ENCODE measurements at regions of chr7 and their contacts with region 1.

Region 1: DNA sequence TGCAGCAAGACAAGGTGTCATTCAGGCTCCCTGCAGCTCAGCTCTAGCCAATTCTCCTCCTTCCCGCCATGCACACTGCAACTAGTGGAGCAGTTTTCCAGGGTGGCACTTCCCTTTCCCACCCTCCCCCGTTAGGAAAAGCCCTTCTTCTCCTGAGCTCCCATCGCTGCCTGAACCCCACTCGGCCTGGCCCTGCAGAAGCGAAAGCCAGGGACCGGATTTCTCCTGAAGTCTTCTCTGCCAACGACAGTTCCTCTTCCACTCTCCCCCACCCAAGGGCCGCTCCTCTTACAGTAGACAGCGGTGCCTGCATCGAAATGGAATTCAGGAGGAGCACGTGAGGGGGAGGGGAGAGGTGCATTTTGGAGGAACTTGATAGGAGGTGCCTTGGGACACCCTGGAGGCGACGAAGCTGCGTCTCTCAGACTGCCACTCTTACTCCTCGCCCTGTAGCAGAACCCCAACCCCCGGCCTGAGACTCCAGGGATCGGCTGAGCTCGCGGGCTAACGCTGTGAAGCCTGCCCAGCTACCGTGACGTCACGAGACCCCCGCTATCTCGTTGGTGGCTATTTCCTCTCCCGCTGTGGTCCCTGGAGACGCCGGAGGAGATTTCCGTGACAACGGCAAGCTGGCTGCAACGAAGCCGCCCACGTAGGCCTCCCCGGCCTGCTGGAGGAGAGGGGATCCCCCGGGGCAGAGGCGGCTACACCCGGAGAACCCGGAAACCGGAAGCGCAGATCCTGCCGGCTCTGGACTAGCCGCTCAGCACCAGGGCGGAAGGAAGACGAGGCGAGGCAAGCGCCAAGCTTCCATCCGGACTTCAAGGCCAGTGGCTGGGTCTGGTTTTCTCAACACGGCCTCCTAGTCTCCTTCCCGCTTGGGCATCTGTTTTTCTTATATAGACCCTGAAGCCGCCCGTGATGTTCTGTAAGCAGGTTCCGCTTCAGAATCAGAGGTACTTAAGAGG is 109.7 kb downstream of the RALA start:
- DNase-seq: peak; percentile 84 to 98 (median 95)
- ATAC-seq: peak; percentile 92
- H3K4me3 ChIP-seq: peak overlapping the region; percentile 79 to 85
- H3K4me3 Mint-ChIP-seq: peak overlapping the region; percentile 91
- H3K27ac ChIP-seq: peak overlapping the region; percentile 66 to 91
- H3K27ac Mint-ChIP-seq: peak overlapping the region; percentile 94
- H3K4me1 ChIP-seq: peaks cover 26% of the 10 kb centered on the region
- H3K4me1 Mint-ChIP-seq: peaks cover 40% of the 10 kb centered on the region
- H3K27me3 ChIP-seq: no peaks in the 10 kb centered on the region
- H3K27me3 Mint-ChIP-seq: no peaks in the 10 kb centered on the region
- CTCF ChIP-seq: no peak

Region 2: GRCh38 chr7:39589323-39590111 is 143.6 kb before region 1 on chr7:
- CTCF ChIA-PET with region 1: no interaction called
- POLR2A ChIA-PET with region 1: interaction called, 5 read pairs
- intact Hi-C with region 1: loop called in 1 of 2 experiments (anchors 1 kb)
- DNase-seq: peak in 8 of 9 experiments; percentile 34 to 85 (median 58)
- ATAC-seq: peak; percentile 77
- H3K4me3 ChIP-seq: no peak overlapping the region
- H3K4me3 Mint-ChIP-seq: no peak overlapping the region
- H3K27ac ChIP-seq: no peak overlapping the region
- H3K27ac Mint-ChIP-seq: peak overlapping the region; percentile 49
- H3K4me1 ChIP-seq: peaks cover 10% of the 10 kb centered on the region
- H3K4me1 Mint-ChIP-seq: peaks cover 22% of the 10 kb centered on the region
- H3K27me3 ChIP-seq: no peaks in the 10 kb centered on the region
- H3K27me3 Mint-ChIP-seq: no peaks in the 10 kb centered on the region
- CTCF ChIP-seq: no peak

Region 3: DNA sequence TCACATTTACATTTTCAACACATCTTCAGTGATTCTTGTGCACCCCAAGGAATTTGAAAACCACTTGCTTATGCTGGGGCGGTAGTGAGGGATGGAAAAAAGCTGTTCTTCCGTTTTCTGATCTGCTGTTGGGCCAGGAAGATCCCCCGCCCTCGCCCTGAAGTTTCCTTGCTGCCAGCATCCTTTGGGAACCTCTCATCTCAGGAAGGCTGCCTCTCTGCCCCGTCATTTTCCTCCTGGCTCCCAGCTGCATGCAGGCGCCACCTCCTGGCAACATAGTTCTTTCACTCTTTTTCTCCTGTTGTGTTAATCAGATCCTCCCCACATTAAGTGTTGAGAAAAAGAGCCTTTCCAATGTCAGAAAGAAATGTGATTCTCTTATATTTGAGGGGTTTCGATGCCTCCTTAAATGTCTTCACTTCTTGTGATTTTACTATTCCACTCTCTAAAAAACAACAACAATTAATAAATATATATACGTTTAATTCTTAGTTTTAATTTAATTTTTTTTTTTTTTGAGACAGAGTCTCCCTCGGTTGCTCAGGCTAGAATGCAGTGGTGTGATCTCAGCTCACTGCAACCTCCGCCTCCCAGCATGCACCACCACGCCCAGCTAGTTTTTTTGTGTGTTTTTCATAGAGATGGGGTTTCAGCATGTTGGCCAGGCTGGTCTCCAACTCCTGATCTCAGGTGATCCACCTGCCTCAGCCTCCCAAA is 13.1 kb after region 1 on chr7:
- CTCF ChIA-PET with region 1: interaction called, 47 read pairs
- POLR2A ChIA-PET with region 1: interaction called, 6 read pairs
- intact Hi-C with region 1: no loop called
- DNase-seq: peak in 8 of 9 experiments; percentile 30 to 75 (median 65)
- ATAC-seq: peak; percentile 65
- H3K4me3 ChIP-seq: no peak overlapping the region
- H3K4me3 Mint-ChIP-seq: peak overlapping the region; percentile 49
- H3K27ac ChIP-seq: no peak overlapping the region
- H3K27ac Mint-ChIP-seq: peak overlapping the region; percentile 75
- H3K4me1 ChIP-seq: peaks cover 4% of the 10 kb centered on the region
- H3K4me1 Mint-ChIP-seq: peaks cover 5% of the 10 kb centered on the region
- H3K27me3 ChIP-seq: no peaks in the 10 kb centered on the region
- H3K27me3 Mint-ChIP-seq: no peaks in the 10 kb centered on the region
- CTCF ChIP-seq: peak; percentile 62

Region 4: DNA sequence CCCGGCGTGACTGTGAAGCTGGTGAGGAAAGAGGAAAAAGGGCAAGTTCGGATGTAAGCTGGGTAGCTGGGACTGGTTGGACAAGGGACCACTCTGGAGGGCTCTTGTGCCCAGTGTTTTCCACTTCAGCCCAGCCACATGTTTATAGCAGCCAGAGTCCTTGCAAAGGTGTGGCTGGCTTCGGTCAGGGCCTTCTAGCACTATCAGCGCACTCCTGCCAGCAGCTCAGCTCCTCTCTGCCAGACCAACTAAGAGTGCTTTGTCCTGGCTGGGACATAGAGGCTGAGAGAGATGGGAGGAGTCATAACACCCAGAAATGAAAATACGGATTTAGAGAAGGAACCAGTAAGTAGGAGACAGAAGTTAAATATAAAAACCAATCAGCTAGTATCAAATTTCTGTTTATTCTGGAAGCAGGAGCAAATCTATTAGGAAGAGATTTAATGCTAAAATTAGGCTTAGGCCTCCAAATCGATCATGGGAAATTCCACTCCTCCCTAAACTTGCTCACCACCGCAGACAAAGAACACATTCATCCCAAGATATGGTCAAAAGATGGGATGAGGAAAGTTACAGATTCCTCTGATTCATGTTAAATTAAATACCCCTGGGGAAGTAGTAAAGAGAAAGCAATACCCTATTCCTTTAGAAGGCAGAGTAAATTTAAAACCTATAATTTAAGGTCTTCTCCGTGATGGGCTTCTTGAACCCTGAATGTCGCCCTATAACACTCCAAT is 25.3 kb after region 1 on chr7:
- CTCF ChIA-PET with region 1: no interaction called
- POLR2A ChIA-PET with region 1: no interaction called
- intact Hi-C with region 1: no loop called
- DNase-seq: no peak
- ATAC-seq: no peak
- H3K4me3 ChIP-seq: no peak overlapping the region
- H3K4me3 Mint-ChIP-seq: no peak overlapping the region
- H3K27ac ChIP-seq: no peak overlapping the region
- H3K27ac Mint-ChIP-seq: no peak overlapping the region
- H3K4me1 ChIP-seq: no peaks in the 10 kb centered on the region
- H3K4me1 Mint-ChIP-seq: peaks cover 7% of the 10 kb centered on the region
- H3K27me3 ChIP-seq: no peaks in the 10 kb centered on the region
- H3K27me3 Mint-ChIP-seq: no peaks in the 10 kb centered on the region
- CTCF ChIP-seq: no peak

Region 5: DNA sequence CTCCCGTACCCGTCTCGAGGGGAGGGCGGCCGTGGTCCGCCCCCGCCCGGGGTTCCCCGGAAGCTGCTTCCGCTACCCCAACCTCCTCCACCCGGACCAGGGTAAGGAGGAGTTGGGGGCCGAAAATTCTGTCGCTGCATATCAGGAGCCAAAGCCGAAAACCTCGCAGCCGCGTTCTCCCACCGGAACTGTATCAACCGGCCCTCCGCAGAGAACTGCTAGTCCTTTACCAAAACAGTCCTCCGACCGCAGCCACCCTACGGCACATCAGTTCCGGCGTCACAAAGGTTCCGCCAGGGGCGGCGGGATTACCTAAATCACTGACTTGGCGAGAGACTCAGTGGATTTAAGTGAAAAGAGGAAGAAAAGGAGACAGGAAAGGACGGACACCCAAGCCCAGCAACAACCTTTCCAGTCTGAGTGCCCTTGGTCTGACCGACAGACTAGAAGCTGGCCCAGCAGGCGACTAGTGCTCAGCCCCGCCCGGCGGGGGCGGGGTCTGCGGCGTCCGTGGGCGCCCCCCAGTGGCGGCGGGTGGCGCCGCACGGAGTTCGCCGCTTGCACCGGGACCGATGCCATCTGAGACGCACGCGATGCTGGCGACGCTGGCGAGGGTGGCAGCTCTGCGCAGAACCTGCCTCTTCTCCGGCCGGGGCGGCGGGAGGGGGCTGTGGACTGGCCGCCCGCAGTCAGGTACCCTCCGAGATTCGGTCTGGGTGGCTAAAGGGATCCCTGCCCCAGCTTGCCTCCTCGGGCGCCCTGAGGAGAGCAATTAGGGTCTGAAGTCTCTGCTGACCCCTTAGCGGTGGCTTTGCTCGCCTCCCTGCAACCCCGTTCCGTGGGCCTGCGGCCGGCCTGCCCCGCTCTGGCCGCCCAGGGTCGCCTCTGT is 401.6 kb after region 1 on chr7 and contains the starts of genes MPLKIP and SUGCT:
- CTCF ChIA-PET with region 1: no interaction called
- POLR2A ChIA-PET with region 1: interaction called, 5 read pairs
- intact Hi-C with region 1: loop called in 1 of 2 experiments (anchors 2 kb)
- DNase-seq: peak; percentile 72 to 93 (median 86)
- ATAC-seq: peak; percentile 89
- H3K4me3 ChIP-seq: peak within 1 kb of the TSS; percentile 86 to 98
- H3K4me3 Mint-ChIP-seq: peak within 1 kb of the TSS; percentile 99
- H3K27ac ChIP-seq: peak within 1 kb of the TSS; percentile 85 to 87
- H3K27ac Mint-ChIP-seq: peak within 1 kb of the TSS; percentile 98
- H3K4me1 ChIP-seq: peaks cover 33% of the 10 kb centered on the region
- H3K4me1 Mint-ChIP-seq: peaks cover 41% of the 10 kb centered on the region
- H3K27me3 ChIP-seq: no peaks in the 10 kb centered on the region
- H3K27me3 Mint-ChIP-seq: no peaks in the 10 kb centered on the region
- CTCF ChIP-seq: peak; percentile 90
- total RNA-seq, gene MPLKIP: 11.2 to 13.3 TPM
- total RNA-seq, gene SUGCT: 1.7 to 3.4 TPM